ENCODE measurements at regions of chr3 and their contacts with region 1.

Region 1: GRCh38 chr3:127304121-127304744 is 16.4 kb upstream of the PRR20G start:
- DNase-seq: no peak
- H3K4me3 ChIP-seq: no peak overlapping the region
- H3K4me3 Mint-ChIP-seq: no peak overlapping the region
- H3K27ac ChIP-seq: no peak overlapping the region
- H3K27ac Mint-ChIP-seq: no peak overlapping the region
- H3K4me1 ChIP-seq: peaks cover 34 to 48% of the 10 kb centered on the region in 2 donors
- H3K4me1 Mint-ChIP-seq: peaks cover 53% of the 10 kb centered on the region
- H3K27me3 ChIP-seq: no peaks in the 10 kb centered on the region
- H3K27me3 Mint-ChIP-seq: peaks cover 0 to 15% (median 6%) of the 10 kb centered on the region in 3 donors
- CTCF ChIP-seq: no peak

Region 2: GRCh38 chr3:126911162-126912026 is 392.8 kb before region 1 on chr3:
- intact Hi-C with region 1: loop called in 1 of 2 experiments (anchors 10 kb)
- DNase-seq: peak; percentile 95 to 99 (median 98)
- H3K4me3 ChIP-seq: peak overlapping the region in 1 of 3 experiments; percentile 16
- H3K4me3 Mint-ChIP-seq: peak overlapping the region; percentile 67 to 82
- H3K27ac ChIP-seq: peak overlapping the region; percentile 75 to 84
- H3K27ac Mint-ChIP-seq: peak overlapping the region; percentile 94 to 97 (median 96)
- H3K4me1 ChIP-seq: peaks cover 31 to 40% of the 10 kb centered on the region in 2 donors
- H3K4me1 Mint-ChIP-seq: peaks cover 38% of the 10 kb centered on the region
- H3K27me3 ChIP-seq: peaks cover 69 to 91% of the 10 kb centered on the region in 2 donors
- H3K27me3 Mint-ChIP-seq: peaks cover 32 to 46% (median 35%) of the 10 kb centered on the region in 3 donors
- CTCF ChIP-seq: no peak

Measured in CD14-positive monocyte (primary cell).